ENCODE measurements at regions of chr14 and their contacts with region 1.

Region 1: GRCh38 chr14:21455911-21456667 is at the start of gene CHD8:
- DNase-seq: peak; percentile 99 to 100 (median 100)
- H3K4me3 ChIP-seq: peak within 1 kb of the TSS; percentile 75 to 77
- H3K4me3 Mint-ChIP-seq: peak within 1 kb of the TSS; percentile 93 to 99 (median 96)
- H3K27ac ChIP-seq: peak within 1 kb of the TSS; percentile 88
- H3K27ac Mint-ChIP-seq: peak within 1 kb of the TSS; percentile 94 to 100 (median 99)
- H3K4me1 ChIP-seq: peaks cover 47% of the 10 kb centered on the region
- H3K4me1 Mint-ChIP-seq: peaks cover 23 to 46% (median 34%) of the 10 kb centered on the region in 4 donors
- H3K27me3 ChIP-seq: no peaks in the 10 kb centered on the region
- H3K27me3 Mint-ChIP-seq: no peaks in the 10 kb centered on the region
- total RNA-seq, gene CHD8: 131 to 132 TPM

Region 2: GRCh38 chr14:21308479-21309237 is 147.4 kb before region 1 on chr14:
- CTCF ChIA-PET with region 1: no interaction called
- POLR2A ChIA-PET with region 1: interaction called, 3 read pairs
- intact Hi-C with region 1: loop called (anchors 1 kb)
- DNase-seq: peak; percentile 83 to 93 (median 85)
- H3K4me3 ChIP-seq: peak overlapping the region; percentile 43 to 45
- H3K4me3 Mint-ChIP-seq: peak overlapping the region; percentile 81 to 91 (median 88)
- H3K27ac ChIP-seq: peak overlapping the region; percentile 48
- H3K27ac Mint-ChIP-seq: peak overlapping the region; percentile 80 to 96 (median 92)
- H3K4me1 ChIP-seq: peaks cover 13% of the 10 kb centered on the region
- H3K4me1 Mint-ChIP-seq: peaks cover 12 to 19% (median 17%) of the 10 kb centered on the region in 4 donors
- H3K27me3 ChIP-seq: no peaks in the 10 kb centered on the region
- H3K27me3 Mint-ChIP-seq: no peaks in the 10 kb centered on the region

Region 3: GRCh38 chr14:21383848-21384493 is 72.1 kb before region 1 on chr14 and contains the start of gene SUPT16H:
- CTCF ChIA-PET with region 1: interaction called, 7 read pairs
- POLR2A ChIA-PET with region 1: interaction called, 10 read pairs
- intact Hi-C with region 1: loop called (anchors 1 kb)
- DNase-seq: peak; percentile 91 to 96 (median 93)
- H3K4me3 ChIP-seq: peak within 1 kb of the TSS; percentile 98 to 99
- H3K4me3 Mint-ChIP-seq: peak within 1 kb of the TSS; percentile 95 to 100 (median 97)
- H3K27ac ChIP-seq: peak within 1 kb of the TSS; percentile 82
- H3K27ac Mint-ChIP-seq: peak within 1 kb of the TSS; percentile 96 to 100 (median 99)
- H3K4me1 ChIP-seq: peaks cover 47% of the 10 kb centered on the region
- H3K4me1 Mint-ChIP-seq: peaks cover 25 to 53% (median 38%) of the 10 kb centered on the region in 4 donors
- H3K27me3 ChIP-seq: no peaks in the 10 kb centered on the region
- H3K27me3 Mint-ChIP-seq: no peaks in the 10 kb centered on the region
- total RNA-seq, gene SUPT16H: 84.5 to 87.2 TPM

Region 4: DNA sequence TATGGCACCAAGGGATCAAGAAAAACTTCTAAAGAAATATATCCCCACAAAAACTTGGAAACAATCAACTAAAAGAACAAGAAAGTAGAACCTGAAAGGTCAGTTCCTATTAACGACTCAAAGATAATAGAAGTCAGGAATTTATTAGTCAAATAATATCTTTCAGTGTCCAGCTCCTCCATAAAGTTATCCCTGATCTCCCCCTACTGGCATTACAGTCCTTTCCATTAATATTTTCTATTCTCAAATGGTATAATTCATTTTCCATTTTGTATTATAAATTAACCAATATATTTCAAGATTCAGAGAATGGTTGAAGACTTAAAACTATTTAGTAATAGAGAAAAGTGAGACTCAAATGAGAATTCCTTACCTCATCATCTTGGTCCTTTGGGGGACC is 60.6 kb before region 1 on chr14:
- CTCF ChIA-PET with region 1: no interaction called
- POLR2A ChIA-PET with region 1: no interaction called
- intact Hi-C with region 1: no loop called
- DNase-seq: no peak
- H3K4me3 ChIP-seq: no peak overlapping the region
- H3K4me3 Mint-ChIP-seq: no peak overlapping the region
- H3K27ac ChIP-seq: no peak overlapping the region
- H3K27ac Mint-ChIP-seq: no peak overlapping the region
- H3K4me1 ChIP-seq: no peaks in the 10 kb centered on the region
- H3K4me1 Mint-ChIP-seq: no peaks in the 10 kb centered on the region
- H3K27me3 ChIP-seq: no peaks in the 10 kb centered on the region
- H3K27me3 Mint-ChIP-seq: no peaks in the 10 kb centered on the region

Region 5: DNA sequence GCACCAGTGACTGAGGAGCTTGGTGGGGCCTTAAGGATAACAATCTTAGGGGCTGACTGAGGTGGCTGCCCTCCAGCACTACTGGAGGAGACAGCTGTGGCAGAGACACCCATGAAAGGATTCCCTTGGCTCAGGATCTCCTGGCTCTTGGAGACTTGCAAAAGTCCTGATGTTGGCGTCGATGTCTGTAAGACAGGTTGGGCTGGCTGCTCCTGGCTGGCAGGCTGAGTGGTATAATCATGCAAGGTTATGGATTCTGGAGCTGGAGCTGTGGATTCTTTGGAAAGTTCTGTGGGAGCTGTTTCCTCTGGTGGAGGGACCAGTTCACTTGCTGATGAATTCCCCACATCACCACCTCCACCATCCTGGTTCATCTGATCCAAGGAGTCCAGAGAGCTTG is 25.0 kb before region 1 on chr14:
- CTCF ChIA-PET with region 1: interaction called, 82 read pairs
- POLR2A ChIA-PET with region 1: interaction called, 171 read pairs
- intact Hi-C with region 1: no loop called
- DNase-seq: no peak
- H3K4me3 ChIP-seq: no peak overlapping the region
- H3K4me3 Mint-ChIP-seq: no peak overlapping the region
- H3K27ac ChIP-seq: no peak overlapping the region
- H3K27ac Mint-ChIP-seq: no peak overlapping the region
- H3K4me1 ChIP-seq: peaks cover 26% of the 10 kb centered on the region
- H3K4me1 Mint-ChIP-seq: peaks cover 33 to 40% (median 37%) of the 10 kb centered on the region in 4 donors
- H3K27me3 ChIP-seq: no peaks in the 10 kb centered on the region
- H3K27me3 Mint-ChIP-seq: no peaks in the 10 kb centered on the region

Region 6: GRCh38 chr14:21437063-21437901 is 18.8 kb before region 1 on chr14:
- CTCF ChIA-PET with region 1: interaction called, 82 read pairs
- POLR2A ChIA-PET with region 1: interaction called, 171 read pairs
- intact Hi-C with region 1: loop called (anchors 1 kb)
- DNase-seq: peak; percentile 98 to 99 (median 98)
- H3K4me3 ChIP-seq: peak overlapping the region; percentile 64 to 95
- H3K4me3 Mint-ChIP-seq: peak overlapping the region; percentile 94 to 99 (median 96)
- H3K27ac ChIP-seq: peak overlapping the region; percentile 85
- H3K27ac Mint-ChIP-seq: peak overlapping the region; percentile 93 to 99 (median 96)
- H3K4me1 ChIP-seq: peaks cover 38% of the 10 kb centered on the region
- H3K4me1 Mint-ChIP-seq: peaks cover 49 to 74% (median 62%) of the 10 kb centered on the region in 4 donors
- H3K27me3 ChIP-seq: no peaks in the 10 kb centered on the region
- H3K27me3 Mint-ChIP-seq: no peaks in the 10 kb centered on the region

Region 7: GRCh38 chr14:21476925-21477681 is 21.0 kb after region 1 on chr14 and contains the starts of genes RAB2B and TOX4:
- CTCF ChIA-PET with region 1: interaction called, 44 read pairs
- POLR2A ChIA-PET with region 1: interaction called, 65 read pairs
- intact Hi-C with region 1: loop called (anchors 1 kb)
- DNase-seq: peak; percentile 98
- H3K4me3 ChIP-seq: peak within 1 kb of the TSS; percentile 69 to 97
- H3K4me3 Mint-ChIP-seq: peak within 1 kb of the TSS; percentile 98 to 100 (median 100)
- H3K27ac ChIP-seq: peak within 1 kb of the TSS; percentile 81
- H3K27ac Mint-ChIP-seq: peak within 1 kb of the TSS; percentile 95 to 100 (median 100)
- H3K4me1 ChIP-seq: peaks cover 27% of the 10 kb centered on the region
- H3K4me1 Mint-ChIP-seq: peaks cover 28 to 63% (median 45%) of the 10 kb centered on the region in 4 donors
- H3K27me3 ChIP-seq: no peaks in the 10 kb centered on the region
- H3K27me3 Mint-ChIP-seq: no peaks in the 10 kb centered on the region
- total RNA-seq, gene RAB2B: 29.3 to 30.4 TPM
- total RNA-seq, gene TOX4: 83.6 to 86.0 TPM

Region 8: DNA sequence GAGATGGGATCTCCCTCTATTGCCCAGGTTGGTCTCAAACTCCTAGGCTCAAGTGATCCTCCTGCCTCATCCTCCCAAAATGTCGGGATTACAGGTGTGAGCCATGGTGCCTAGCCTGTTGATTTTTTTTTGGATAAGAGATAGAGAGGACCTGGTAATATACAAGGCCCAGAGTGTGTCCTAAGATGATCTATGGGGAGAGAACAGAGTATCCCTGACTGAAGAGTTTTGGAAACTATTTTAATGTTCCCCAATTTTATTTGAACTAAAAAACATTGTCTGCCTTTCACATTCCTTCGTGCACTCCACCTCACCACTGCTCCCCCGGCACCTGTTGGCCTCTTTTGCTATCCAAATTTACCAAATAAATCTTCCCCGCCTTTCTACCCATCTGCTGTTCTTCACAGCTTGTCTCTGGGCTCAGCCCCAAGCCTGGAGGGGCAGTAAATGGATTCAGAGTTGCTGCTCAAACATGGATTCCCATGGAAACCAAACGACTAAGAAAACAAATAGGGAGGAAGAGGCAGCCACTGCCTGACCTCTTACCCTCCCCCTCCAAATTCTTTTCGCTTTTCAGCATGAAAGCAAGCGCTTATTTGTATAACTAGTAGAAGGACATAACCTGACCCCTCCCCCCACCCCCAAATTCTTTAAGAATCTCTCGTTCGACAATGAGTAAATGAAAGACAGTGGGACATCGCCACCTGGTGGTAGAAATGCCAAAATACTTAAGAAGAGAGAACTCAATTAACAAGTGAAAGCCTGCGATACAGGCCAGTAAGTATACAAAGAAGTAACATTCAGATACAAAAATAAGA is 101.2 kb after region 1 on chr14:
- CTCF ChIA-PET with region 1: interaction called, 8 read pairs
- POLR2A ChIA-PET with region 1: no interaction called
- intact Hi-C with region 1: loop called (anchors 1 kb)
- DNase-seq: peak; percentile 71 to 77 (median 75)
- H3K4me3 ChIP-seq: peak overlapping the region in 1 of 2 donors; percentile 35
- H3K4me3 Mint-ChIP-seq: peak overlapping the region in 7 of 8 donors; percentile 0 to 58 (median 6)
- H3K27ac ChIP-seq: no peak overlapping the region
- H3K27ac Mint-ChIP-seq: peak overlapping the region in 5 of 7 donors; percentile 3 to 90 (median 83)
- H3K4me1 ChIP-seq: peaks cover 6% of the 10 kb centered on the region
- H3K4me1 Mint-ChIP-seq: peaks cover 4 to 11% (median 6%) of the 10 kb centered on the region in 4 donors
- H3K27me3 ChIP-seq: no peaks in the 10 kb centered on the region
- H3K27me3 Mint-ChIP-seq: no peaks in the 10 kb centered on the region